ENCODE measurements at regions of chr1 and their contacts with region 1.

Region 1: DNA sequence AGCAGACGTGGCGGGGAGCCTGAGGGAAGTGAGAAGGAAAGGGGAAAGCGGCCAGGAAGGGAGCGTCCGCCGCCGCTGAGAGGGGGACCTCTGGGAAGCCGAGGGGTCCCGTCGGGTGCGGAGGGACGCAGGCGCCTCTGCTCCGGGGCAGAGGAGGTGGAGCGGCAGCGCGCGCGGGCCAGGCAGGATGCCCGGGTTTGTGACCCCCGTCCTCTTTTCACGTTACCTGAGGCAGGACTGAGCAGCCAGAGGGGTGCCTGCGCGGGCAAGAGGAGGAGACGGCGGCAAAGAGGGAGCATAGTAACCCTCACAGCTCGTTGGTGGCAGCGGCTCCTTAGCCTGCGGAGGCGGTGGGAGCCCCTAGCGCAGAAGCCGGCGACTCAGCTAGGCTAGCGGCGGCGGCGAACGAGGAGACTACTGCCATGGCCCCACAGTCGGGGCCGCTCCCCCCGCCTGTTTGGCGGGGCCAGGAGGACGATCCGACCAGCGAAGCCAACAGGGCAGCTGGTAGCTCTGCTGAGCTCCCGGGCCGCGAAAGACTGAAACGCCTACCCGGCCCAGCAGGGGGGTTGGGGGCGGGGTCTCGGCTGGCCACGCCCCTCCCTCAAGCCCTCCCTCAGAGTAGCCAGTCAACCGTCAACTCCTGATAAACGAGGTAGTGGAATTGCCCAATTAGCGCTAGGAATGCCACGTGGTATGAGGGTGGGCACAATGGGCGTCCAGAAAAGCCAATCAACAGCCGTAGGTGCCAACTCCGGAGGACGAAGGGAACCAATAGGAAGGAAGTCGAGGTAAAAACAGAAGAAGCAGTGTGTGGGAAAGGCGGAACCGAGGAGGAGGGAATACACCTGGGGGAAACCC is at the start of gene TESK2:
- DNase-seq: peak; percentile 100
- H3K4me3 ChIP-seq: peak within 1 kb of the TSS; percentile 53 to 63 (median 56)
- H3K27ac ChIP-seq: no peak within 1 kb of the TSS
- H3K4me1 ChIP-seq: peaks cover 6% of the 10 kb centered on the region
- H3K27me3 ChIP-seq: peaks cover 8 to 10% of the 10 kb centered on the region in 2 experiments
- CTCF ChIP-seq: peak in 1 of 2 donors; percentile 32
- POLR2A ChIP-seq: no peak
- total RNA-seq, gene TESK2: 2.1 and 2.2 TPM in 2 replicates

Region 2: GRCh38 chr1:44835738-44836675 is 654.8 kb before region 1 on chr1:
- CTCF ChIA-PET with region 1: interaction called, 5 read pairs
- POLR2A ChIA-PET with region 1: no interaction called
- dilution Hi-C with region 1: no loop called
- intact Hi-C with region 1: loop called (anchors 10 kb)
- DNase-seq: peak; percentile 88
- H3K4me3 ChIP-seq: no peak overlapping the region
- H3K27ac ChIP-seq: no peak overlapping the region
- H3K4me1 ChIP-seq: no peaks in the 10 kb centered on the region
- H3K27me3 ChIP-seq: no peaks in the 10 kb centered on the region
- CTCF ChIP-seq: peak; percentile 85 to 93
- POLR2A ChIP-seq: no peak

Region 3: DNA sequence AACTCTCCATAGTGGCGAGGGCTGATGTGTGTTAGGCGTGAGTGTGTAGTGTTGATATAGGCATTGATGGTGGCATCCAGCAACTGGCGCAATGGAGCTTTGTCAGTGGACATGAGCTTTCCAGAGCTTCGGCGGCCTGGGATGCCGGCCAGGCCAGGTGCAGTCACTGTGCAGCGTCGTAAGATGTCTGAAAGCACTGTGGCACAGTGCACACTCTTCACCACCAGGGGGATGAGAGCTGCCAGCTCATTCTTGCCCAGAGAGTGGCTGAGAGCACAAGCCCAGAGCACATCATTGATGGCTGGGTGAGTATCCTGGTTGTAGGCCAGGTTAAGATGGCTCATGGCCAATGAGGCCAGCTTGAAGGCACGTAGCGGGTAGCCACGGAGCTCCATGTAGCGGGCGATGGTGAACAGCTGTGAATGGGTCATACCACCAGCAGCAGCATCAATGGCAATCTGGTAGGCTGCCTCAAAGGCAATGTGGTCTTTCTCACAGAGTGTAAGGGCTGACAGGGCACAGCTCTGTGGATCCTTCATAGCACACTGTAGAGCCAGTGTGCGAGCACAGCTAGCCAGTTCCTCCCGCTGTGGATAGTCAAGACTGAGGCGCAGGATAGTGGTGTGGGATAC is 472.1 kb before region 1 on chr1:
- CTCF ChIA-PET with region 1: interaction called, 133 read pairs
- POLR2A ChIA-PET with region 1: interaction called, 5 read pairs
- dilution Hi-C with region 1: no loop called
- intact Hi-C with region 1: loop called (anchors 1 kb)
- DNase-seq: peak; percentile 63
- H3K4me3 ChIP-seq: no peak overlapping the region
- H3K27ac ChIP-seq: no peak overlapping the region
- H3K4me1 ChIP-seq: peaks cover 3% of the 10 kb centered on the region
- H3K27me3 ChIP-seq: no peaks in the 10 kb centered on the region
- CTCF ChIP-seq: peak; percentile 78 to 93
- POLR2A ChIP-seq: no peak

Region 4: DNA sequence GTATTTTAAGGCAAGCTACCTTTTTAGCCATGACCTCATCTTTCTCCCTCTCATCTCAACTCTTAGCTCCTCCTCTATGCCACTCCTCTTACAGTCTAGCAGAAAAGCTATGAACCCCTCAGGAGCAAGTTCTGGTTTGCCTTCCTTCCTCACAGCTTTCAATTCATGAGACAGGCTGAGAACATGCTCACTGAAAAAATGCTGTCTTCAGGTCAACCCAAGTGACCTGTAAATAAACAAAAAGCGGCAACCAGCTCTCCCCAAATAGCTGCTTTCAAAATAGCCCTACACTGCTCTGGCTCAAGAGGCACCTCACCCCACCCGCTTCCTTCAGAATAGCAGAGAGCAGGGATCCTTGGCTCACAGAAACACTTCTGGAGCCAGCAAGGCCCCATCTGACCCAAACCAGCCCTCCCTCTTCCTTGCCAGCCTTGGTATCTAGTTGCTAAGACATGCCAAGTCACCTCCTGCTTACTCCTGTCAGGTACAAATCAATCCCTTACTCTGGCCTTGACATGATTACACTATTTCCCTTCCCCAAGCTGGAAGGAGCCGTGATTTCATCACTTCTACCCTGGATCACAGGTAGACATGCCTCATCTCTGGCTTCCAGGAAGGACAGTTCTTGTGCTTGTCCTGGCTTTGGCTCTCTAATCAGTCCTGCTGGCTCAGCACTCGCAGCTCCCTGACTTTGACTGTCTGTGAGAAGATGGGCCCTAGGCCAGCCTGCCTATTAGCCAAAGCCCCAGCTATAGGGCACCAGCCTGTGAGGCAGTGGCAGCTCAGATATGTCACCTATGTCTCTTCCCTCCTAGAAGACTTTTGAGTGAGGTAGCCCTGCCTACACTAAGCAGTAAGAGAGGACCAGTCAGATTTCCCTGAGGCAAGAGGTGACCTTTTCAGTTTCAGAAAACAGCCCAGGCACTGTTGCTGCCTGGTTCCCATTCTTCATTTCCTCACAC is 141.9 kb before region 1 on chr1:
- CTCF ChIA-PET with region 1: interaction called, 457 read pairs
- POLR2A ChIA-PET with region 1: no interaction called
- dilution Hi-C with region 1: loop called (anchors 25 kb)
- intact Hi-C with region 1: no loop called
- DNase-seq: no peak
- H3K4me3 ChIP-seq: no peak overlapping the region
- H3K27ac ChIP-seq: no peak overlapping the region
- H3K4me1 ChIP-seq: no peaks in the 10 kb centered on the region
- H3K27me3 ChIP-seq: no peaks in the 10 kb centered on the region
- CTCF ChIP-seq: no peak
- POLR2A ChIP-seq: no peak

Region 5: DNA sequence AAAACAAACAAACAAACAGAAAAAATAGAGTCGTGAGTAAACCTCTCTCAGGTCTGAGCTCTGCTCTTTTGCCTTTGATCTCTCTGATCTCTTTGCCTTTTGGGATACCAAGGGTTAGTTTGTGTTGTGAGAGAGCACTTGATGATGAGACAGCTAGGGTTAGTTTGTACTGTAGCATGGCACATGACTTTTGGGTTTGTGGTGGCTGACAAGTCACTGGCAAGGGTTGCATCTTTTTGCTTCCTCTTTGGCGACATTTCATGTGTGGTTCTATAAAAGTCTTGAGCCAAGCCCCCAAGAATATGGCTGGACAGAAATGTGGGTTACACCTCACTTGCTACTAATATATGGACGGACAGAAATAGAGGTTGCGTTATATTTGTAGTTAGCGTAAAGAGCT is 60.4 kb before region 1 on chr1:
- CTCF ChIA-PET with region 1: no interaction called
- POLR2A ChIA-PET with region 1: interaction called, 12 read pairs
- dilution Hi-C with region 1: no loop called
- intact Hi-C with region 1: no loop called
- DNase-seq: no peak
- H3K4me3 ChIP-seq: no peak overlapping the region
- H3K27ac ChIP-seq: no peak overlapping the region
- H3K4me1 ChIP-seq: no peaks in the 10 kb centered on the region
- H3K27me3 ChIP-seq: no peaks in the 10 kb centered on the region
- CTCF ChIP-seq: no peak
- POLR2A ChIP-seq: no peak

Region 6: GRCh38 chr1:45569962-45570581 is 79.2 kb after region 1 on chr1:
- CTCF ChIA-PET with region 1: interaction called, 30 read pairs
- POLR2A ChIA-PET with region 1: no interaction called
- dilution Hi-C with region 1: no loop called
- intact Hi-C with region 1: no loop called
- DNase-seq: peak; percentile 81
- H3K4me3 ChIP-seq: no peak overlapping the region
- H3K27ac ChIP-seq: no peak overlapping the region
- H3K4me1 ChIP-seq: no peaks in the 10 kb centered on the region
- H3K27me3 ChIP-seq: no peaks in the 10 kb centered on the region
- CTCF ChIP-seq: peak; percentile 89 to 95
- POLR2A ChIP-seq: no peak

Measured in endothelial cell of umbilical vein (primary cell).